CD8-positive, alpha-beta T cell (primary cell): ENCODE measurements at regions of chr2 and their contacts with region 1.

Region 1: GRCh38 chr2:236545814-236546480 is 23.7 kb upstream of the ACKR3 start:
- DNase-seq: peak in 3 of 9 experiments; percentile 36 to 76 (median 58)
- ATAC-seq: peak; percentile 53
- H3K4me3 ChIP-seq: peak overlapping the region; percentile 17 to 33
- H3K4me3 Mint-ChIP-seq: peak overlapping the region; percentile 74
- H3K27ac ChIP-seq: peak overlapping the region; percentile 50 to 87
- H3K27ac Mint-ChIP-seq: peak overlapping the region; percentile 87
- H3K4me1 ChIP-seq: peaks cover 75% of the 10 kb centered on the region
- H3K4me1 Mint-ChIP-seq: peaks cover 95% of the 10 kb centered on the region
- H3K27me3 ChIP-seq: no peaks in the 10 kb centered on the region
- H3K27me3 Mint-ChIP-seq: no peaks in the 10 kb centered on the region
- CTCF ChIP-seq: no peak

Region 2: GRCh38 chr2:236472720-236473495 is 73.0 kb before region 1 on chr2:
- CTCF ChIA-PET with region 1: no interaction called
- POLR2A ChIA-PET with region 1: no interaction called
- intact Hi-C with region 1: no loop called
- DNase-seq: no peak
- ATAC-seq: no peak
- H3K4me3 ChIP-seq: no peak overlapping the region
- H3K4me3 Mint-ChIP-seq: no peak overlapping the region
- H3K27ac ChIP-seq: no peak overlapping the region
- H3K27ac Mint-ChIP-seq: no peak overlapping the region
- H3K4me1 ChIP-seq: no peaks in the 10 kb centered on the region
- H3K4me1 Mint-ChIP-seq: no peaks in the 10 kb centered on the region
- H3K27me3 ChIP-seq: no peaks in the 10 kb centered on the region
- H3K27me3 Mint-ChIP-seq: peaks cover 8% of the 10 kb centered on the region
- CTCF ChIP-seq: no peak

Region 3: DNA sequence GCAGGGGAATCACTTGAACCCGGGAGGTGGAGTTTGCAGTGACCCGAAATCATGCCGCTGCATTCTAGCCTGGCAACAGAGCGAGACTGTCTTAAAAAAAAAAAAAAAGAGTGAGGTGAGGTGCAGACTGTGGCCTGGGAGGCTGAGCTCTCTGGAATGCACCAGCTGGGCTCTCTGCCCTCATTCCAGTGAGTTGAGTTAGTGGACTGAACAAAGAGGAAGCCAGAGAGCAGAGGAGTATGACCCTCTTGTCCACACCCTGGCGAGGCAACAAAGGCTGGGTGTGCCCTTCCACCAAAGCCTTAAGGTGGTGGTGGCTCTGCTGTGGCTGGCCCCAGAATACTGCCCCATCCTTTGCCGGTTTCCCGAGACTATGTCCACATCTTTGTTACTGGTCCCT is 47.6 kb before region 1 on chr2:
- CTCF ChIA-PET with region 1: no interaction called
- POLR2A ChIA-PET with region 1: no interaction called
- intact Hi-C with region 1: no loop called
- DNase-seq: no peak
- ATAC-seq: no peak
- H3K4me3 ChIP-seq: no peak overlapping the region
- H3K4me3 Mint-ChIP-seq: no peak overlapping the region
- H3K27ac ChIP-seq: no peak overlapping the region
- H3K27ac Mint-ChIP-seq: no peak overlapping the region
- H3K4me1 ChIP-seq: no peaks in the 10 kb centered on the region
- H3K4me1 Mint-ChIP-seq: no peaks in the 10 kb centered on the region
- H3K27me3 ChIP-seq: no peaks in the 10 kb centered on the region
- H3K27me3 Mint-ChIP-seq: peaks cover 9% of the 10 kb centered on the region
- CTCF ChIP-seq: no peak

Region 4: GRCh38 chr2:236558993-236559978 is 13.3 kb after region 1 on chr2:
- CTCF ChIA-PET with region 1: interaction called, 4 read pairs
- POLR2A ChIA-PET with region 1: interaction called, 4 read pairs
- intact Hi-C with region 1: loop called in 1 of 2 experiments (anchors 2 kb)
- DNase-seq: no peak
- ATAC-seq: no peak
- H3K4me3 ChIP-seq: no peak overlapping the region
- H3K4me3 Mint-ChIP-seq: no peak overlapping the region
- H3K27ac ChIP-seq: no peak overlapping the region
- H3K27ac Mint-ChIP-seq: peak overlapping the region; percentile 58
- H3K4me1 ChIP-seq: peaks cover 23% of the 10 kb centered on the region
- H3K4me1 Mint-ChIP-seq: peaks cover 51% of the 10 kb centered on the region
- H3K27me3 ChIP-seq: no peaks in the 10 kb centered on the region
- H3K27me3 Mint-ChIP-seq: no peaks in the 10 kb centered on the region
- CTCF ChIP-seq: no peak

Region 5: GRCh38 chr2:236904389-236905280 is 358.7 kb after region 1 on chr2:
- CTCF ChIA-PET with region 1: no interaction called
- POLR2A ChIA-PET with region 1: no interaction called
- intact Hi-C with region 1: no loop called
- DNase-seq: no peak
- ATAC-seq: no peak
- H3K4me3 ChIP-seq: no peak overlapping the region
- H3K4me3 Mint-ChIP-seq: no peak overlapping the region
- H3K27ac ChIP-seq: no peak overlapping the region
- H3K27ac Mint-ChIP-seq: no peak overlapping the region
- H3K4me1 ChIP-seq: no peaks in the 10 kb centered on the region
- H3K4me1 Mint-ChIP-seq: no peaks in the 10 kb centered on the region
- H3K27me3 ChIP-seq: no peaks in the 10 kb centered on the region
- H3K27me3 Mint-ChIP-seq: peaks cover 20% of the 10 kb centered on the region
- CTCF ChIP-seq: no peak